Calu3 (cell line): ENCODE measurements at regions of chr3 and their contacts with region 1.

Region 1: DNA sequence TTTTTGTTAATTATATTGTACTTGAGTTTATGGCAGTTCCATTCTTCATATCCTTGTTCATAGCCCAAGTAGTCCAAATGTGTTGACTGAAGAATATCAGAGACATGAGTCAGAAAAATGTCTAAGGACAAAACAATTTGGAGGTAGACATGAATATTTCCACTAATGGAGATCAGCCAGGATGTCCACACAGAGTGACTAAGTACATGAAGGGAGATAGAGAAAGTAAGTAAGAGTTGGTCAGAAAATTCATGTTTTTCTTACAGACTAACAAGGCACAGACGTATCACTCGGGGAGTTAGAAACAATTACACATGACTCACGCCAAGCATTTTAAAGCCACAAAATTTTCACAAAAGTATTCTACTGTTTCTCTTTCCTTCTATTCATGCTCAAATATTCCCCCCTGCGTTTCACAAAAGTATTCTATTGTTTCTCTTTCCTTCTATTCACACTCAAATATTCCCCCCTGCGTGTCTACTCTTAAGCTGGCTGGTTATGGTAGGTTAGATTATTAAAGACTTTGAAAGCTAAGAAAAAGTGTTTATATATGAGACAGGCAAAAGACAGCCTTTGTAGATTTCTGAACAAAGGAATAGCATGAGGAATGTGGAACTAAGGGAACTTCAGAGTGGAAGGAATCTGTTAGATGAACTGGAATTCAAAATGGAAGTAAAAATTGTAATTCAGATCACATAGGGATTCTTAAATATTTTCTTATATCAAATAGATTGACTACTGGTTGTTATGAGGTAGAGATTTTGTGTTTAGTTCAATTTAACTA is 648.7 kb upstream of the CCDC54 start:
- DNase-seq: peak; percentile 28
- H3K4me3 Mint-ChIP-seq: peak overlapping the region; percentile 40
- H3K27ac Mint-ChIP-seq: peak overlapping the region; percentile 85
- H3K4me1 Mint-ChIP-seq: peaks cover 48% of the 10 kb centered on the region
- H3K27me3 Mint-ChIP-seq: no peaks in the 10 kb centered on the region
- CTCF ChIP-seq: no peak

Region 2: DNA sequence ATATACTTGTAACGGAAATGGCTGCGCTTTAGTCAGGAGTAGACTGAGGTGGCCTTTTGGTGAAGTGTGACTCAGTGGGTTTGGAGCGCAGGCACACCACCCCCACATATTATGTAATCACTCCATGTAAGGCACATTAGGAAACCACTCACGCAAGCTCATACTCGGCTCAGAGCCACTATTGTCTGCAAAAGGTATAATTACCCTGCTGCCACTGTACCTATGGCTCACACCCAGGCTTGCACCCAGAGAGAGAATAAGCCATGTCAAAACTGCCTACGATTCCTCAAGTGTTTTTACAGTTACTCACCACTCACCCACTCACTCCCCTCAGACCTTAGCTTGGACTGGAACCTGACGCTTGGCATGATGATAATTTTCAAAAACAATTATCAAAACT is 36.8 kb after region 1 on chr3:
- CTCF ChIA-PET with region 1: interaction called, 5 read pairs
- intact Hi-C with region 1: loop called (anchors 5 kb)
- DNase-seq: peak; percentile 76
- H3K4me3 Mint-ChIP-seq: no peak overlapping the region
- H3K27ac Mint-ChIP-seq: peak overlapping the region; percentile 91
- H3K4me1 Mint-ChIP-seq: peaks cover 10% of the 10 kb centered on the region
- H3K27me3 Mint-ChIP-seq: no peaks in the 10 kb centered on the region
- CTCF ChIP-seq: no peak

Region 3: GRCh38 chr3:106792716-106793115 is 64.2 kb after region 1 on chr3:
- CTCF ChIA-PET with region 1: no interaction called
- intact Hi-C with region 1: no loop called
- DNase-seq: no peak
- H3K4me3 Mint-ChIP-seq: no peak overlapping the region
- H3K27ac Mint-ChIP-seq: no peak overlapping the region
- H3K4me1 Mint-ChIP-seq: peaks cover 30% of the 10 kb centered on the region
- H3K27me3 Mint-ChIP-seq: no peaks in the 10 kb centered on the region
- CTCF ChIP-seq: no peak

Region 4: DNA sequence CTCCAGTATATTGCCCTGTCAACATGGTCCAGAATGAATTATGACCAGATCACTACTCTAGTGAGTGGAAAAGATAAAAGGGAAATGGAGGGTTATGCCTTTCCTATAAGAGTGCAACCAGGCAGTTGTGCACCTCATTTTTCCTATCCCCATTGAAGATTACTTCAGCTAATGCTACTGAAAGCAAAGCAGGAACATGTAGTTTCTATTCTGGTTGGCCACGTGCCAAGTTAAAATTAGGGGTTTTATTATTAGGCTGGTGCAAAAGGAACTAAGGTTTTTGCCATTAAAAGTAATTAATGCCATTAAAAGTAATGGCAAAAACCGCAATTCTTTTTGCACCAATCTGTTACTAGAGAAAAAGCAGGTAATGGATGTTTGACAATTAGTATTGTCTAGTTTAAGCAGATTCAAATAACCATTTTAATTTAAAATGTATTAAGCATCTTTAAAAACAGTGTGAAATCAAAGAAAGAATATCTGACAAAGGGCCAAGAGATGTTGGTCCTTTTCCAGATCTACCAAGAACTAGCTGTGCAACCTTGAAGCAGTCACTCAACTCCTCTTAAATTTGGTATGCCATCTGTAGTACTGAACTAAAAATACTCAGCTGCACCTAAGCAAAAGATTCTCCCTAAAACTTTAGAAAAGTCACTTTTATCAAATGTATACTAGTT is 81.3 kb after region 1 on chr3:
- CTCF ChIA-PET with region 1: no interaction called
- intact Hi-C with region 1: loop called (anchors 10 kb)
- DNase-seq: no peak
- H3K4me3 Mint-ChIP-seq: no peak overlapping the region
- H3K27ac Mint-ChIP-seq: no peak overlapping the region
- H3K4me1 Mint-ChIP-seq: no peaks in the 10 kb centered on the region
- H3K27me3 Mint-ChIP-seq: no peaks in the 10 kb centered on the region
- CTCF ChIP-seq: no peak